ENCODE measurements at regions of chr17 and their contacts with region 1.

Region 1: GRCh38 chr17:81601525-81602120 is 35.3 kb downstream of the NPLOC4 start:
- DNase-seq: no peak

Region 2: DNA sequence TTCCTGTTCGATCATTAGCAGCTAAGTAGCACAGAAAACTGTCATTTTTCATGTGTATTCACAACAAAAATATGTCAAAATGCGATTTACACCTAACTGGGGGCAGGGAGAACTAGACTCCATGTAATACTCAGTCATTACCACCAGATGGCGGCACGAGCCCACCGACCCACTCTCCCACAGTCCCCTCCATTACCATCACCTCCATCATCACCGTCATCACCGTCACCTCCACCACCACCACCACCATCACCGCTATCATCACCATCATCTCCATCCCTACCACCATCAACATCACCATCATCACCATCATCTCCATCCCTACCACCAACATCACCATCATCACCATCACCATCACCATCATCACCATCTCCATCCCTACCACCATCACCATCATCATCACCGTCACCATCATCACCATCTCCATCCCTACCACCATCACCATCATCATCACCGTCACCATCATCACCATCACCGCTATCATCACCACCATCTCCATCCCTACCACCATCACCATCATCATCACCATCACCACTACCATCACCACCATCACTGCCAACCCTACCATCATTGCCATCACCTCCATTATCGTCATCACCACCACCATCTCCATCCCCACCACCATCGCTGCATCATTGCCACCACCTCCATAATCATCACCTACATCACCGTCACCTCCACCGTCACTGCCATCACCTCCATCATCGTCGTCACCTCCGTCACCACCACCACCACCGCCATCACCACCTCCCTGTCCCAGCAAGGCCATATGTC is 348.1 kb before region 1 on chr17:
- intact Hi-C with region 1: loop called (anchors 5 kb)
- DNase-seq: no peak

Region 3: GRCh38 chr17:81481073-81481799 is 120.4 kb before region 1 on chr17:
- intact Hi-C with region 1: no loop called
- DNase-seq: peak; percentile 85

Region 4: DNA sequence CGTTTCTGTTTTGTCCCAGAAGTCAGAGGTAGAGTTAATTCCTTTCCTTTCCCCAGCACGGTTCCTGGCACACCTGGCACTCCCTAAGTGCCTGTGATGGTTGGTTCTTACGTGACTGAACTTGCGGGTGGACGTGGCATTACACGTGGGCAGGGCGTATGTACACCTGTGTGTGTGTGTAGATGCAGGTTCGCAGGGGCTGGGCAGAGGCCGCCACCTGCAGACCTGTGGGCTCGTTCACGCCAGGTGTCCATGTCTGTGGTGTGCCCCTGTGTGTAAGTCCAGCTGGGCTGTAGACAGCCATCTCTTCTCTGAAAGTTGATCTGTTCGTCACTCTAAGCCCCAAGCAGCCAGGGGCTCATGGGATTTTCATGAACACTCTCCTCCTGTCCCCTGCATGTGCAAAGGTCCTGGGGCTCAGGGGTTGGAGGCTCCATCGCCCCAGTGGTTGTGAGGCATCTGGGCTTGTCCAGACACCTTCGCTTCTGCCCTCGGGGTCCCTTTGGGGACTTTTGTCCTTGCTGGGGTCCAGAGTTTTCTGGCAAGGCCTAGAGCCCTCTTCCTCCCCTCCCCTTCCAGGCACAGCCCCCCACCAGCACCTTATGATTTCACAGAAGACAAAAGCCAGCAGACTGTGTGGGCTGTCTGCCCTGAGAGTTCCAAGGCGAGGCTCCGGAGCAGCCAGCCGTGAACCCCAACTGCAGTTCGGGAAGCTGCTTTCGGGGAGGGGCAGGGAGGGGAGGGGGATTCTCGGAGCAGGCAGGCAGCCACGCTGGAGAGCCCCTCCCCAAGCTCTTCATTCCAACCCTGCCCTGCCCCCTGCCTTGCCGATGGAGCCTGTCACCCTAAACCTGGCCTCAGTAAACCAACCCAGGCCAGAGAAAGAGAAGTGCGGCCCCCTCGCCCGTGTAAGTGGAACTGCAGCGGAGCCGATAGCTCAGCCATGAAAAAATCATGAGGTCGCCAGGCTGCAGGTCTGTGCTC is 78.8 kb before region 1 on chr17:
- intact Hi-C with region 1: loop called (anchors 5 kb)
- DNase-seq: no peak

Region 5: DNA sequence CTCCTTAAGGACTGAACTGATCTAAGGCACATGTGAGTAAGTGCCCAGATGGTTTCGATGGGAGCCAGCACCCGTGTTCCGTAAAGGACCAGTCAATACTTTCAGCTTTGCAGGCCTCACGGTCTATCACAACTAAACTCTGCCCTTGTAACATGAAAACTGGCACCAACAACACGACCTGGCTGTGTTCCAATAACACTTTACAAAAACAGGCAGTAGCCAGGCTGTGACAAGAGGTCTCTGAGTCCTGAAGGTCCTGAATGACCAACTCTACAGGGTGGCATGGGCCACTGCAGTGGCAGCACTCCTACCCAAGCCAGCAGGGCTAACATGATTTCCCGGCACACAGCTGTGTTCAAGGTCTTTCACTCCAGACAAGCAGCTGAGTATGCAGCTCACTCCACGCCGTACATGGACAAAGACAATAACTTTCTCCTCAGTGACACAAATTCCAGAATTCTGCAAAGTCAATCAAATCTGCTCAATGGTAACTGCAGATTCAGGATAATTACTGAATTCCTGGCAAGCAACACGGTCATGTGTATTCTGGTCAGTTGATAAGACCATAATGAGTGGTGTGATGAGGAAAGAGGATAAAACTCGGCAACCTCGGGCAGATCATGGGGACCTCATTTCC is 20.0 kb after region 1 on chr17:
- intact Hi-C with region 1: no loop called
- DNase-seq: no peak

Region 6: GRCh38 chr17:81948635-81949378 is 347.2 kb after region 1 on chr17:
- intact Hi-C with region 1: no loop called
- DNase-seq: no peak